ENCODE measurements at regions of chr2 and their contacts with region 1.

Region 1: DNA sequence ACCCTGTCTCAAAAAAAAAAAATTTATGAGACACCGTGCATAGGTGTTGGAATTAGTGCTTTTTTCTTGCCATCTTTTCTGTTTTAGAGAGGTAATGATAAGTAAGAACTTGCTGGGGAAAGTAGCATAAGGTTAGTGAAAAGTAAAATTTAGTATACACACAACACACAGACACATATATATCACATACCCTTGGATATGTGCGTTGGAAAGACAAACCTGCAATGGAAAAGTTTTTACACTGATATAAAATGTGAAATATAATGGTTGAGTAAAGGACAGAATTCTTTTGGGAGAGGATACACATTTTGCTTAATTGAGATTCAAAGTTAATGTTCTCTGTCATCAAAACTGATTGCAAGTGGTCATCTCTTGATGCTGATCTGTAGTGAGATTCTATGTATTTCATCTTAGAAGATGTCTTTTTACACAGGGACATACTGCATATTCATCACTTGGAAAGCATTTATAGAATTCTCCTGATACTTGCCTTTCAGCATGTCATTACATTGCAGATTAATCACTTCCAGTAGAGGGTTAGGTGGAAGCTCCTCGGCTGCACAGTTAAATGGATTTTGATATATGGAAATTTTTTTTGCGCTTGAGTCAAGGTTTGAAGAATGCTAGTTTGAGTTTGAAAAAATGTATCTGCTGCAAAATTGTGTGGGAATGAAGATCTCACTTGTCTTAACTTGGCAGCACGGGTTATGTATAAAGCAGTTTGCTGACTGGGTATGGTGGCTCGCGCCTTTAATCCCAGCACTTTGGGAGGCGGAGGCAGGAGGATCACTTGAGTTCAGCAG is 13.5 kb downstream of the PPP1CB start:
- DNase-seq: no peak
- ATAC-seq: no peak

Region 2: DNA sequence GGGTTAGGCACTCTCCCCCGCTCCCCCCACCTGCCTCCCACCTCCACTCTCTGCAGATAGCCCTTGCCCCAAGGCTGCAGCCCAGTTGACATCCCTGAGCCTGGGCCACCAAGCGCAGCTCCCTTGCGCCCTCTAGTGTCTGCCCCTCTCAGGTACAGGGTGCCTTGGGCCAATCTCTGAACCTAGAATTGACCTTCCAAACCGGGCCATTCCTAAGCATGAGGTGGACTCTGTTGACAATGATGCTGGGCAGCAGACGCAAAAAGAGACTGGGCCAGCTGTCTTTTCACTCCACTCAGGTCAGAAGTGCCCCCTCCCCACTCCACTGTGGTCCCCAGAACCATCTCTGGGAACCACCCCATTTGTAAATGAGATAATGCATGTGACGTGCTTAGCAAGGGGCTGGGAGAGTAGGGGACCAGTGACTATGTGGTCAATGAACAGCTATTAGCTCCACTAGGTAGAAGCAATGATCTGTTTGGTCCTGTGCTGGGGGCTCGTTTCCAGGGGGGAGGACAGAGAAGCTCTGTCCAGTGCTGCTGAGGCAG is 312.5 kb before region 1 on chr2:
- intact Hi-C with region 1: no loop called
- DNase-seq: peak; percentile 59 to 88
- ATAC-seq: peak; percentile 93

Region 3: GRCh38 chr2:28577791-28578680 is 187.1 kb before region 1 on chr2:
- intact Hi-C with region 1: loop called in 1 of 2 experiments (anchors 10 kb)
- DNase-seq: no peak
- ATAC-seq: no peak